ENCODE measurements at regions of chr13 and their contacts with region 1.

Region 1: DNA sequence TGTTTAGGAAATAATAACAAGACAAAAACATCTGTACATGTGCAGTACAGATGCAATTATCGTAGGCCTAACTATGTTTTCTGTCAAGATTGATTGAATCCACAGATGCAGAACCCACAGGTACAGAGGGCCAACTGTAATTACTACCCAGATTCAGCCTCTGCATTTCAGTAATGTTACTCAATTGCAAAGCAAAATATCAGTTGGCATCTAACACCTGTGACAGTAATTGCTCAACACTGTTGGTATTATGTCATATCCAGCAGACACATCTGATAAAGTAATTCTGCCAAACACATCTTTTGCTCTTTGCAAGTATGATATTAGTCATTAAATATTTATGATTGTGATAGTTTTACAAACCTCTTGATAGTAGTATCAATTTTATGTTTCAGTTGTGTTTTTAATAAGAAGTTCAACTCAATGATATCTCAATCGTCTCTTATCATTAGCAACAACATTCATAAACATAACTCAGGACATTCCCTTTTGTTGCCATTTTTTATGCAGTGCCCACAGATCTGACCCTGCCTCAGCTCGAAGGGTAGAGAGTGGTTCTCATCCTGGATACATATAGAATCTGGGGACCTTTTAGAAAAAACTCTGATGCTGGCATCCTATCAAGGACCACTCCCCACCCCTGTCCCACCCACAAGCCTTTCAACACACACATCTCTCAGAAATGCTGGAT is 104.7 kb downstream of the MYCBP2 start:
- DNase-seq: no peak
- H3K4me3 Mint-ChIP-seq: no peak overlapping the region
- H3K27ac Mint-ChIP-seq: no peak overlapping the region
- H3K4me1 Mint-ChIP-seq: peaks cover 35% of the 10 kb centered on the region
- H3K27me3 Mint-ChIP-seq: no peaks in the 10 kb centered on the region

Region 2: DNA sequence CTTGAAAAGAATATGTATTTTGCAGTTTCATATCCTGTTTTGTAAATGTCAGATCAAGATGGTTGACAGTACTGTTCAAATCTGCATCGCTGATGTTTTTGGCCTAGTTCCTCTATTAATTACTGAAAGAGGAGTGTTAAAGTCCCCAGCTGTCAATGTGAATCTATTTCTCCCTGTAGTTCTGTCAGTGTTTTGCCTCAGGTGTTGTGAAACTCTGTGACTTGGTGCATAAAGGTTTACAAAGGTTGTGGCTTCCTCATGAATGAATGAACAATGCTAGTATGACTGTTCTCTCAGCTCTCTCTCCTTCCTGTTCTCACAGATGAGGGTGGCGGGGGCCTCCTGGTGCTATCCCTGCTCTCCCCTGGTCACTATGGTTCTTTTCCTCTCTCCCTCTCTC is 37.7 kb before region 1 on chr13:
- CTCF ChIA-PET with region 1: no interaction called
- POLR2A ChIA-PET with region 1: no interaction called
- intact Hi-C with region 1: loop called (anchors 2 kb)
- DNase-seq: peak; percentile 77
- H3K4me3 Mint-ChIP-seq: no peak overlapping the region
- H3K27ac Mint-ChIP-seq: peak overlapping the region; percentile 40
- H3K4me1 Mint-ChIP-seq: peaks cover 22% of the 10 kb centered on the region
- H3K27me3 Mint-ChIP-seq: no peaks in the 10 kb centered on the region

Region 3: DNA sequence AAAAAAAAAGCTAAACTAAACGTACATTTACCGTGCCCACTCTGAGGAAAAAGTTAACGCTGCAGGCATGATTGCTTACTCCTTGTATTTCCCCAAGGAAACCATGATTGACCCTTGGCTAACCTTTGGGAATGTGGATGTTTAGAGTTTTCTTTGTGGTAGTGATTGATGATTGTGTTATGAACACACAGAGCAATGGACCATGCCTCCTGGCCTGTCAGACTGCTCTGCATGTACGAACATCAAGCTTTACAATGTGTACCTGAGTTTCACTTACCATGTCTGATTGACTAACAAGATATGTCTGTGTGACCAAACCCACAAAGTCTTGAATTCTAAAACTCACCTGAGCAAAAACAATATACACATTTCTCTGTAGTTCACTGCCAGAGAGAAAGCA is 69.6 kb after region 1 on chr13:
- CTCF ChIA-PET with region 1: no interaction called
- POLR2A ChIA-PET with region 1: no interaction called
- intact Hi-C with region 1: loop called (anchors 1 kb)
- DNase-seq: no peak
- H3K4me3 Mint-ChIP-seq: no peak overlapping the region
- H3K27ac Mint-ChIP-seq: peak overlapping the region; percentile 42
- H3K4me1 Mint-ChIP-seq: peaks cover 39% of the 10 kb centered on the region
- H3K27me3 Mint-ChIP-seq: no peaks in the 10 kb centered on the region